ENCODE measurements at regions of chr17 and their contacts with region 1.

Region 1: DNA sequence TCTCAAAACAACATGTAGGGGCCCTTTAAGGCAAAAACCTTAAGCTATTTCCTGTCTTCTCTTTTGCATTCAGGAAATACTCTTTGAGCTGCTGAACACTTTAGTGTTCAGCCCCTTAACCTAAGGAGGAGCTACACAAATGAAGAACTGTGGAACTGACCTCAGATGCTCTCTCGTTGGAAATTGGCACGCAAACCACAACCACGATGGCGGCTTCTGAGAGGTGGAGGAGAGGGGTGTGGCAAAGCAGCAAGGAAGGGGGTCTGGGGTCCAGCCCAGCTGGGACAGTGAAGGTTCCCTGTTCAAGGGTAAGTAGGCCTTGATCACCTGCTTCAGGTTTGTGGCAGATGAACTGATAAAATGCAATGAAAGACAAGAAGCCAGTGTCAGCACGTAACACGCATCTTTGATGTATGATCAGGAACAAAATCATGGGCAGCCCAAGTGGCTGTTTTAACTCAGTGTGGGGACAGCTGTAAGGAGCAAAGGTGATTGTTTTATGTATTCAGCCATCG is 291.6 kb upstream of the TNRC6C start:
- DNase-seq: peak; percentile 87
- ATAC-seq: peak; percentile 92
- H3K4me3 Mint-ChIP-seq: peak overlapping the region; percentile 92
- H3K27ac Mint-ChIP-seq: peak overlapping the region; percentile 95
- H3K4me1 Mint-ChIP-seq: peaks cover 40% of the 10 kb centered on the region
- H3K27me3 Mint-ChIP-seq: peaks cover 6% of the 10 kb centered on the region

Region 2: DNA sequence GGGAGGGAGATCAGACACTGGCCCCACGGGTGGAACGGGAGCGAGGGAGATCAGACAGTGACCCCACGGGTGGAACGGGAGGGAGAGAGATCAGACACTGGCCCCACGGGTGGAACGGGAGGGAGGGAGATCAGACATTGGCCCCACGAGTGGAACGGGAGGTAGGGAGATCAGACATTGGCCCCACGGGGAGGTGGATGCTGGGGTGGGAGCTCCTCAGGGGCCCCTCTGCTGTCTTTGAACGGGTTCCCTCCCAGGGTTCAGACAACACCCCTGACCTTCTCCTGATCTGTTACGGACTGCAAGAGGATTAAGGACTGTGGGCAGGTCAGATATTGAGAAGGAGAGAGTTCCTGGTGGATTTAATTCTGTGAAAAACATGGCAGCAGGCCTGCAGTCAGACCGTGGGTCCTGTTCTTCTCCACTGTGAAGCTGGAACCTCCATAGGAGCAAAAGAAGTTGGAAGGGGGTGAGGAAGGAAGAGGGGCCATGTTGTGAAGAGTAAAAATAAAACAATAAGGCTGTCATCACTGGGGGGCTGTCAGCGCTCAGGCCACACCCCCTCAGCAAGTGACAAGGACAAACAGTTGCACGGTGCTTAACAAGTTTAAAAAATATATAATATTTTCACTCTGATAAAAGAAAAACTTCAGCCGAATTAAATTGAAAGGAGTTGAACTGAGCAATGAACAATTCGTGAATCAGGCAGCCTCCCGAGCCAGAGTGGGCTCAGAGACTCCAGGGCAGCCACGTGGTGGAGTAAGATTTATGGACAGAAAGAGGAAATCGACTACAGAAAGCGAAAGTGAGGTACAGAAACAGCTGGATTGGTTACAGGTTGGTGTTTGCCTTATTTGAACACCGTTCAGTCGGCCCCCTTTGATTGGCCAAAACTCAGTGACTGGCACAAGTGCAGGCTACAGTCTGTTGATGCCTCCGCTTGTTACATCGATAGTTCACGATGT is 57.1 kb before region 1 on chr17:
- POLR2A ChIA-PET with region 1: interaction called, 18 read pairs
- DNase-seq: peak; percentile 57
- ATAC-seq: peak; percentile 99
- H3K4me3 Mint-ChIP-seq: peak overlapping the region; percentile 80
- H3K27ac Mint-ChIP-seq: peak overlapping the region; percentile 94
- H3K4me1 Mint-ChIP-seq: peaks cover 17% of the 10 kb centered on the region
- H3K27me3 Mint-ChIP-seq: peaks cover 5% of the 10 kb centered on the region

Measured in activated naive CD8-positive, alpha-beta T cell treated with anti-CD3 and anti-CD28 coated beads, Interleukin-2, amount 10 ng/mL, durations not matched to agents 7 days and 5 days (primary cell).